ENCODE measurements at regions of chr22 and their contacts with region 1.

Region 1: GRCh38 chr22:35627264-35628041 is 10.3 kb upstream of the MB start:
- DNase-seq: peak; percentile 91
- H3K4me3 ChIP-seq: peak overlapping the region; percentile 50
- H3K27ac ChIP-seq: peak overlapping the region; percentile 96
- H3K4me1 ChIP-seq: no peaks in the 10 kb centered on the region
- H3K27me3 ChIP-seq: no peaks in the 10 kb centered on the region
- CTCF ChIP-seq: peak; percentile 35

Region 2: GRCh38 chr22:35838855-35839576 is 211.6 kb after region 1 on chr22:
- intact Hi-C with region 1: loop called (anchors 10 kb)
- DNase-seq: peak; percentile 64
- H3K4me3 ChIP-seq: peak overlapping the region; percentile 21
- H3K27ac ChIP-seq: peak overlapping the region; percentile 52
- H3K4me1 ChIP-seq: no peaks in the 10 kb centered on the region
- H3K27me3 ChIP-seq: no peaks in the 10 kb centered on the region
- CTCF ChIP-seq: no peak

Region 3: GRCh38 chr22:35921777-35922176 is 294.3 kb after region 1 on chr22:
- intact Hi-C with region 1: loop called (anchors 5 kb)
- DNase-seq: peak; percentile 76
- H3K4me3 ChIP-seq: no peak overlapping the region
- H3K27ac ChIP-seq: peak overlapping the region; percentile 11
- H3K4me1 ChIP-seq: no peaks in the 10 kb centered on the region
- H3K27me3 ChIP-seq: no peaks in the 10 kb centered on the region
- CTCF ChIP-seq: peak; percentile 36

Region 4: DNA sequence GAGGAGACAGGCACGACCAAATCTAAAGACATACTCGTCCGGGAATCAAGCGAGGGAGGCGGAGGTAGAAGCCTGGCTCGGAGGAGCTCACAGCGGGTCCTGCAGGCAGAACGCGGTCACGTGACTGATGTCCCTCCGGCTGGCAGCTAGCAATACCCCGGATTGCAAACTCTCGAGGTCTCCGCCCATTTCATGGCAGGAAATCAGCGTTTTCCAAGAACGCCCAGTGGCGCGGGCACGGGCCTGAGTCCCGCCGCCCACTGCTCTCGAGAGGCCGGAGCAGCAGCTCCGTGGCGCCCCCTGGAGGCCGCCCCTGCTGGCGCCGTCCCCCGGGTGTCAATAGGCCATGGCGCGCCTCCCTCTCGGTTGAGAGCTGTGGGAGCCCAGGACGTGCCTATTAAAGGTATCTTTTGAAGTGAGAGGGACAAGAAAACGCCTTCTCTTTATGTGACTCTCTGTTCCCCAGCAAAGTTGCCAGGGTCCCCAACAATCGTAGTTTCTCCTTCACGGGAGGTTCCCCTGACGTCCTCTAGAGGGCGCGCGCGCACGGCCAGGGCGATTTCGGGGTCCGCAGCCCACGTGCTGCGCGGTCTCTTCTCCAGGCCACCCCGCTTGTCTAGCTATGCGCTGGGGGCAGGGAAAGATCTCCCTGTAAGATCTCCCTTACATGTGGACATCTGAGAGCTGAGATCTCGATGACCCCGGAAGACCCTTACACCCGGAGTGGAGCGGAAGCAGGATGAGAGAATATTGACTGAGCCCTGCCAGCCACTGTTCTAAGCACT is 438.5 kb after region 1 on chr22:
- intact Hi-C with region 1: loop called (anchors 10 kb)
- DNase-seq: peak; percentile 87
- H3K4me3 ChIP-seq: peak overlapping the region; percentile 36
- H3K27ac ChIP-seq: peak overlapping the region; percentile 53
- H3K4me1 ChIP-seq: no peaks in the 10 kb centered on the region
- H3K27me3 ChIP-seq: no peaks in the 10 kb centered on the region
- CTCF ChIP-seq: peak; percentile 100